ENCODE measurements at regions of chr1 and their contacts with region 1.

Region 1: GRCh38 chr1:112803906-112804762 is 89.0 kb upstream of the PPM1J start:
- DNase-seq: peak; percentile 68 to 90 (median 81)

Region 2: DNA sequence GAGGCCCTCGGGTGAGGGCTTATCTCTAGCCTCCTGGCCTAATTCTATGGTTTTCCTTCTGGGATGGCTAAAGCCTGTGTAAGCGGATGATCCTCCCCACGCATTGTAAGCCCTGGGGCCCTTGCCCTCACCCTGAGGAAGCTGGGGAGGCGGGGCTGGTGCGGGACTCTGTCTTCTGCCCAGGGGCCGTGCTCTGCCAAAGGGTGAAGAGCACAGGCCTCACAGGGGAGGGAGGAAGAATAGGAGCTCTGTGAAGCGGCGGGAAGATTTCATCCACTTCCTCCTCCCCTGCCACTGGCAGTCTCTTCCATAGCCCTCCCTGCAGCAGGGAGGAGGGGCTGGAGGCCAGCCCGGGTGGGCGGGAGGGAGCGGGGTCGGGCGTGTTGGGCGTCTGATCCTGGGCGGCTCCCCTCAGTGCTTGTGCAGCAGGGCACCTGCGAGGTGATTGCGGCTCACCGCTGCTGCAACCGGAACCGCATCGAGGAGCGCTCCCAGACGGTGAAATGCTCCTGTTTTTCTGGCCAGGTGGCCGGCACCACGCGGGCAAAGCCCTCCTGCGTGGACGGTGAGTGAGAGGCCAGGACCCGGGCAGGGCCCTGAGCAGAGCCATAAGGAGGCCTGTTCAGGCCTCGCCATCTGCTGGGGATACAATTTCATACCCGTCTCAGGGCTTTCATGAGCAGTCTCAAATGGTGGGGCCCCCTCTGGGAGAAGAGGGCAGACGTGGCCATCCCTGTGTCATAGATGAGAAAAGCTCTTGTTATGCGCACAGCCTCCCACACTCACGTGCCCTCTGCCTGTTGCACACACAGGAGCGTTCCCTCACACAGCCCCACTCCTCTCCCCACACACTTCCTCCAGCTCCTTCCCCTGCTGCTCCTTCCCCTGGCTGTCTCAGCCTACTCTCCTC is 81.3 kb before region 1 on chr1:
- intact Hi-C with region 1: loop called (anchors 5 kb)
- DNase-seq: peak in 1 of 42 donors; percentile 39

Region 3: GRCh38 chr1:112852242-112852641 is 48.1 kb after region 1 on chr1:
- intact Hi-C with region 1: no loop called
- DNase-seq: no peak

Region 4: DNA sequence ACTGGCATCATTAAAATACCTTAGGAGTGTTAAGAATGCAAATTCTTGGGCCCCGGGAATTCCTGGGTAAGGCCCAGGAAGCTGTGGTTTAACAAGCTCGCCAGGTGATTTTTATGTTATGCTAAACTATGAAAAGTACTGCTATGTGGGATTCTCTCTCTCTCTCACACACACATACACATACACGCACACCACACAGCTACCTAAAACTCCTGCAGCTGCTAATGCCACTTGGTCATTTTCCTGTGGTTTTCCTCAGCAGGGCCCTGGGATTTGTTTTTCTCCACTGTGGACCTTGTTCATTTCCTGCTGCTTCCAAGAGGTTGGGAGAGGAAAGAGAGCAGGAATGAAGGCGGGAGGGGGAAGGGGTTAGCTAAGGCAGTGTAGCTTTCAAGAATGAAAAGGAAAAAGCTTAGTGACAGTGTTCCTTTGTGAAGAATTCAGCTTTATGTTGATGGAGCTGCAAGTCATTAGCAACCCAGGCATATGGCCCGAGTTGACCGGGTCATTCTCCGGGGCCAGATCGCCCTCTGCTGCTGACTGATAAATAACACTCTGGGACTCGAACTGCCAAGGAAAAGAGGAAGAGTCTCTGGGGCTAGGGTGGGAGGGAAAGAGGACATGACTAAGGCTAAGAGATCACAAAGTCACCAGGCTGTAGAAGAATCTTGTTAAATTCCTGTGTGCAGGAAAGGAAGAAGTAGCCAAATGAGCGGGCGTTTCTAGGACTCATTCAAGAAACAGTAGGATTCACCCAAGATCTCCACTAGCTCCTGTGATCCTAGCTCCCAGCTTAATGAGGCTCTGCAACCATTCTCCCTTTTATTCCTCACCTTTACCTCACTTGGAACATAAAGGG is 238.4 kb after region 1 on chr1:
- intact Hi-C with region 1: loop called (anchors 10 kb)
- DNase-seq: peak; percentile 36 to 94 (median 83)

Measured in head of caudate nucleus (tissue), 42 donors.